ENCODE measurements at regions of chr4 and their contacts with region 1.

Region 1: DNA sequence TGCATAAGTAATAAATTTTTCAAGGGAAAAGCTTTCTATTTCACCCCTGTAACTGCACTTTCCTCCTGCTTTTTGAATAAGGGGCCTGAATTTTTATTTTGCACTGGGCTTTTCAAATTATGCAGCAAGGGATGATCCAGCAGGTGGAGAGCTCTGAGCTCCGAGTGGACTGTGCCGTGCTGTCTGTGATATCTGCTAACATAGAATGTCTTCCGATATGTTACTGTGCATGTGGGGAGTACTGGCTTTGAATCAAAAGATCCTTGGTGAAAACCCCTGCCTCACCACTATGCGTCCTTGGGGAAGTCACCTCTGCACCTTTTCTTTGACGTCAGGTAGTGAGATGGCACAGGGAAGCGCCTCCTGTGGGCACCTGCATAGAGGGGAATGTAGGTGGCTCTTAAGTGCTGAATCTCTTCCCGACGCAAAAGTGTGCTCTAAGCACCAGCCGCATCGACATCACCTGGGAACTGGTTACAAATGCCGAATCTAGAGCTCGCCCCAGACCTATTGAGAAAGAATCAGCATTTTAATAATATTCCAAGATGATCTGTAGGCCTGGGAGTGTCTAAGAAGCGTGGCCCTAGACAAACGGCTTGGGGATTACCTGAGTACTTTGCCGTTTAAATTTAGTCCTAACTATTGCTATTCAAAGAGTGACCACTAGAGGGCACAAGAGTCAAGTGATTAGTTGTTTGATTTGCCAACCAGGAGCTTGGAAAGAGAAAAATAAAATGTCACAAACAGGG is 19.2 kb upstream of the WFS1 start:
- DNase-seq: peak in 1 of 5 donors; percentile 13
- ATAC-seq: peak in 2 of 4 donors; percentile 29 to 36
- H3K4me3 ChIP-seq: no peak overlapping the region
- H3K27ac ChIP-seq: no peak overlapping the region
- H3K4me1 ChIP-seq: peaks cover 0 to 5% (median 0%) of the 10 kb centered on the region in 12 donors
- H3K27me3 ChIP-seq: peaks cover 0 to 46% (median 15%) of the 10 kb centered on the region in 9 donors
- CTCF ChIP-seq: peak; percentile 75 to 90 (median 86)
- POLR2A ChIP-seq: no peak

Region 2: DNA sequence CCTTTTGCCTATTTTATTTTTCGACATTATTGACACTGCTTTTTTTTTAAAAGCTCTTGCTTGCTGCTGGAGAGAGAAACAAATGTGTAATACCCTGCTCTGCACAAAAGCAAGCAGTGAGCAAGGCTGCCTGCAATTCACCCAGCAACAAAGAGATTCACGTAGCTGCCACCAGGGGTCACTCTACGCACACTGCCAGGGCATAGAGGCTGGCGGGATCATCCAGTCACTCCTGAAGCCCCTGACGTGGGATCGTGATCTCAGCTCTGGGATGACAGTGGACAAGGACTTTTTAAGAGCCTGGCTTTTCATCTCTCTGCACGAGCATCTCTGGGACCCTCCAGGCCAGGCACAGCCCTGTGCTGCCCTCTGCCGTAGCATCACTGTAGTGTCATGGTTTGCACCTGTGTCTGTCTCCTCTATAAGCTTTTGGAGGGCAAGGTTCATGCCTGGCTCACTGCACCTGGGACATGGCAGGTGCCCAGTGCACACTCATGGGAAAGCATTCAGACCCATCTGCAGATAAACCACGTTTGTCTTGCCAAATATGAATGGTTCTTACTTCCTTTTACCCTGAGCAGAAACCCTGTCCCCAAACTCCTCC is 252.0 kb before region 1 on chr4:
- intact Hi-C with region 1: loop called in 2 of 10 experiments (anchors 2 to 10 kb)
- DNase-seq: peak in 4 of 5 donors; percentile 33 to 50 (median 44)
- ATAC-seq: peak in 3 of 4 donors; percentile 69 to 79 (median 75)
- H3K4me3 ChIP-seq: no peak overlapping the region
- H3K27ac ChIP-seq: no peak overlapping the region
- H3K4me1 ChIP-seq: no peaks in the 10 kb centered on the region
- H3K27me3 ChIP-seq: peaks cover 0 to 41% (median 0%) of the 10 kb centered on the region in 9 donors
- CTCF ChIP-seq: peak; percentile 69 to 91 (median 88)
- POLR2A ChIP-seq: no peak

Region 3: GRCh38 chr4:6008766-6009385 is 241.5 kb before region 1 on chr4:
- intact Hi-C with region 1: no loop called
- DNase-seq: no peak
- ATAC-seq: no peak
- H3K4me3 ChIP-seq: no peak overlapping the region
- H3K27ac ChIP-seq: no peak overlapping the region
- H3K4me1 ChIP-seq: peaks cover 0 to 11% (median 0%) of the 10 kb centered on the region in 12 donors
- H3K27me3 ChIP-seq: peaks cover 3 to 63% (median 19%) of the 10 kb centered on the region in 9 donors
- CTCF ChIP-seq: no peak
- POLR2A ChIP-seq: no peak

Region 4: DNA sequence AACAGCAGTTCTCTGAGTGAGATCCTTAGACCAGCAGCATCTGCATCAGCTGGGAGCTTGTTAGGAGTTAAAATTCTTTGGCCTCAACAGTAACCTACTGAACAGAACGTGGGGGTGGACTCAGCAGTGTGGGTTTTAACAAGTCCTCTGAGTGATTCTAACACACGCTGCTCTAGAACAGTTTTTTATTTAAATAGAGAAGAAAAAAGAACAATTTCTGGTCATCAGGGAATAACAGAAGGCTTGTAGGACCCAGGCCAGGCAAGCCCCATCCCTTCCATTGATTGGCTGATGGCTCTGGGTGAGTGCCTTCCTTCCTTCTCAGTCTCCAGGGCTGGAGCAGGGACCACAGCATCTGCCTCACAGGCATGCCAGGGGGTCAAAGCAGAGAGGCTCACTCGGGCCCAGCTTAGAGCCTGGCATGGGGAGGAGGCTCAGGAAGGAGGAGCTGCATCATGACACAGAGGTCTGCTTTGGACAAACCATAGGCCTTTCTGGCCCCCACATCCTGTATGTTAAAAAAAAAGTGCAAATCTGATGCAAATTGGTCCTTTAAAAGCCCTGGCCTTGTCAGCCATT is 106.7 kb before region 1 on chr4:
- intact Hi-C with region 1: no loop called
- DNase-seq: no peak
- ATAC-seq: no peak
- H3K4me3 ChIP-seq: no peak overlapping the region
- H3K27ac ChIP-seq: no peak overlapping the region
- H3K4me1 ChIP-seq: no peaks in the 10 kb centered on the region
- H3K27me3 ChIP-seq: no peaks in the 10 kb centered on the region
- CTCF ChIP-seq: no peak
- POLR2A ChIP-seq: no peak

Region 5: GRCh38 chr4:6338175-6338950 is 88.0 kb after region 1 on chr4:
- intact Hi-C with region 1: no loop called
- DNase-seq: peak in 1 of 5 donors; percentile 43
- ATAC-seq: no peak
- H3K4me3 ChIP-seq: no peak overlapping the region
- H3K27ac ChIP-seq: no peak overlapping the region
- H3K4me1 ChIP-seq: peaks cover 0 to 7% (median 0%) of the 10 kb centered on the region in 12 donors
- H3K27me3 ChIP-seq: peaks cover 3 to 45% (median 8%) of the 10 kb centered on the region in 9 donors
- CTCF ChIP-seq: no peak
- POLR2A ChIP-seq: no peak

Region 6: DNA sequence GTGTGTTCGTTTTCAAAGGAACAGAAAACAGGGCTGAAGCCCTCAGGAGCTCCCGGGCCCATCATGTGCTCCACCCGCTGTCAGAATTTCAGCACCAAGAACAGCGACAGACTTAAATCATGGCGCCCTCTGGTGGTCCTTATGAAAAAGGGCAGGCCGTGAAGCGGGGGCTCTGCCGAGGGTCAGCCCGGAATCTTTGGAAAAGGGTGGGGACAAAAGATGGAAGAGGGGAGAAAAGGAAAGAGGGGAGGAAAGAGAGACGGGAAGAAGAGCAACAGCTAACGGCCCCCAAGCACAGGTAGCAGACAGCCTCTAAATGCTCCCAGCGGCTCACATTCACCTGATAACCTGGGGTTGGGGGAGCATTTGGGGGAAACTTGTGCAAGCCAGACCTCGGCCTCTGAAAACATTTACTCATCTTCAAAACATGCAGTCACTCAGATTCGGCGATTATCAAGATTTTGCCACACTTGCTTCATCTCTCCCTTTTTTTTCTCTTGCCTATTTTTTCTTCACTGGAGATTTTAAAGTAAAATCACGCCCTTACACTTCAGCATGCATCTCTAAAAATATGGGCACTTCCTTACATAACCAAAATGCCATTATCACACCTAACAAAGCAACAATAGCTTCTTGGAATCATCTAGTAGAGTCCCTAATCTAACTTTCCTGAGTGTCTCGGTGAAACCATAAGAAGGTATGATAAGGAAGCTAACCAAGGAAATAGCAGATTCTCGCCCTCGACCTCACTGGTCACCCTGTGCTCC is 296.5 kb after region 1 on chr4:
- intact Hi-C with region 1: loop called in 5 of 10 experiments (anchors 2 to 10 kb)
- DNase-seq: peak in 3 of 5 donors; percentile 18 to 40 (median 31)
- ATAC-seq: peak in 1 of 4 donors; percentile 37
- H3K4me3 ChIP-seq: no peak overlapping the region
- H3K27ac ChIP-seq: no peak overlapping the region
- H3K4me1 ChIP-seq: peaks cover 0 to 16% (median 0%) of the 10 kb centered on the region in 12 donors
- H3K27me3 ChIP-seq: peaks cover 0 to 14% (median 0%) of the 10 kb centered on the region in 9 donors
- CTCF ChIP-seq: peak; percentile 70 to 86 (median 78)
- POLR2A ChIP-seq: no peak

Region 7: DNA sequence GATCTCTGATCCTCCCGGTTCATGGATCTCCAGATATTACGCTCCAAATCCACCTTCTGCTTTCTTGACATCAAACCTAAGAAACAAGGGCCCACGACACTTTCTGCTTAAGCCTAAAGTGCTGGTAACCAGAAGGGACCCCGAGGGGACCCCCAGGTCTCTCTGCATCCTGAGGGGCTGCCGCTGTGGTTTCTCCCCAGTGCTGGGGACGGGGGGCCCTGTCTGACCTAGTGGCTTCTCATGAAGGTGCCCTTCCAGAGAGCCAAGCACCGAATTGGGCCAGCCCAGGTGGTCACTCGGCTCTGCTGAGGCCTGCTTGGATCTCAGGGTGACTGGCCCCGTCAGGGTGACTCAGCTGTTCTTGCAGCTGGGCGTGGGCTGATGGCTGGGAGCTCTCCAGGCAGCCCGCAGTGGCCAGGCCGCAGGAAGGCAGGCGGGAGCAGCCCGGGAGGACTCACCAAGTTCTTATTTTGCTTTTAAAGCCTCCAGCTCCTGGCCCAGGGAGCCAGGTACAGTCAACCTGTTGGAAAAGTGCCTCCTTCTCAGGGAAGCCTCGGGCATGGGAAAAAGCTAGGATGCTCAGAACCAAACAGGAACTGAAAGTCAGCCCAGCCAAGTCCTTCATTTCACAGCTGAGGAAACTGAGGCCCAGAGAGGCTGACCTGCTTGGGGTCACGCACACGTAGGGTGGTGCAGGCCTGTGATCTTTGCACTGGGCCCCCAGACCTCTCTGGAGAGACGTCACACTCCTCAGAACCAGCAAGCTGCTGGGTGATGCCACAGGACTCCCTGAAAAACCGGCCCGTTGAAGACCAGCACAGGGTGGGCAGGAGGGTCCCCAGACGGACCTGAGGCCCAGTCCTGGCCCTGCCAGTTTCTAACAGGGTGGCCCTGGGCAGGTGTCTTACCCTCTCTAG is 482.3 kb after region 1 on chr4:
- intact Hi-C with region 1: no loop called
- DNase-seq: peak; percentile 62 to 85 (median 80)
- ATAC-seq: peak; percentile 67 to 96 (median 89)
- H3K4me3 ChIP-seq: no peak overlapping the region
- H3K27ac ChIP-seq: peak overlapping the region in 8 of 12 donors; percentile 8 to 75 (median 51)
- H3K4me1 ChIP-seq: peaks cover 0 to 16% (median 8%) of the 10 kb centered on the region in 12 donors
- H3K27me3 ChIP-seq: no peaks in the 10 kb centered on the region
- CTCF ChIP-seq: no peak
- POLR2A ChIP-seq: no peak

Measured in heart left ventricle (tissue), 16 donors.